Mammary epithelial cell (primary cell): ENCODE measurements at regions of chr3 and their contacts with region 1.

Region 1: GRCh38 chr3:127044996-127045715 is 62.2 kb downstream of the PLXNA1 start:
- DNase-seq: no peak
- H3K4me3 ChIP-seq: no peak overlapping the region
- H3K27ac ChIP-seq: no peak overlapping the region
- H3K4me1 ChIP-seq: peaks cover 28% of the 10 kb centered on the region
- H3K27me3 ChIP-seq: no peaks in the 10 kb centered on the region
- CTCF ChIP-seq: no peak

Region 2: DNA sequence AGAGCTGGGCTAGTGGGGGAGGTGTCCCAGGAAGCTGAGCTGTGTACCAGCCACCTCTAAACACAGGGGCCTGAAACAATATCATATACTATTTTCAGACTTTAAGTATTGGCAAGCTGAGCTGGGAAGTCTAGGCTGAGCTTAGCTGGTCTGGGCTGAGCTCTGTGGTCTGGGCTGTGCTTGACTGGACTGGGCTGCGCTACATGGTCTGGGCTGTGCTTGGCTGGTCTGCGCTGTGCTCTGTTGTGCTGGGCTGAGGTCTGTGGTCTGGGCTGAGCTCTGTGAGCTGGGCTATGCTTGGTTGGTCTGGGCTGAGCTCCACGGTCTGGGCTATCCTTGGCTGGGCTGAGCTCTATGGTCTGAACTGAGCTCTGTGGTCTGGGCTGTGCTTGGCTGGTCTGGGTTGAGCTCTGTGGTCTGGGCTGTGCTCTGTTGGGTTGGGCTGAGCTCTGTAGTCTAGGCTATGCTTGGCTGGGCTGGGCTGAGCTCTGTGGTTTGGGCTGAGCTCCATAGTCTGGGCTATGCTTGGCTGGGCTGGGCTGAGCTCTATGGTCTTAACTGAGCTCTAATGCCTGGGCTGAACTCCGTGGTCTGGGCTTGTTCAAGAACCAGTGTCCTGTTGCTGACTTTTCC is 29.7 kb after region 1 on chr3:
- CTCF ChIA-PET with region 1: no interaction called
- dilution Hi-C with region 1: no loop called
- in situ Hi-C with region 1: no loop called
- intact Hi-C with region 1: loop called (anchors 1 kb)
- DNase-seq: peak; percentile 94
- H3K4me3 ChIP-seq: peak overlapping the region in 1 of 3 experiments; percentile 28
- H3K27ac ChIP-seq: peak overlapping the region; percentile 99
- H3K4me1 ChIP-seq: peaks cover 39% of the 10 kb centered on the region
- H3K27me3 ChIP-seq: no peaks in the 10 kb centered on the region
- CTCF ChIP-seq: no peak